ENCODE measurements at regions of chr3 and their contacts with region 1.

Region 1: GRCh38 chr3:25604107-25604805 is 60.5 kb downstream of the TOP2B start:
- DNase-seq: no peak
- ATAC-seq: no peak
- H3K4me3 Mint-ChIP-seq: no peak overlapping the region
- H3K27ac Mint-ChIP-seq: no peak overlapping the region
- H3K4me1 Mint-ChIP-seq: peaks cover 11% of the 10 kb centered on the region
- H3K27me3 Mint-ChIP-seq: no peaks in the 10 kb centered on the region

Region 2: GRCh38 chr3:25594007-25594502 is 10.2 kb before region 1 on chr3:
- CTCF ChIA-PET with region 1: interaction called, 12 read pairs
- DNase-seq: no peak
- ATAC-seq: peak; percentile 33
- H3K4me3 Mint-ChIP-seq: no peak overlapping the region
- H3K27ac Mint-ChIP-seq: no peak overlapping the region
- H3K4me1 Mint-ChIP-seq: no peaks in the 10 kb centered on the region
- H3K27me3 Mint-ChIP-seq: no peaks in the 10 kb centered on the region

Measured in activated CD8-positive, alpha-beta memory T cell treated with anti-CD3 and anti-CD28 coated beads, Interleukin-2, amount 10 ng/mL, durations not matched to agents 7 days and 5 days (primary cell).